ENCODE measurements at regions of chr21 and their contacts with region 1.

Region 1: GRCh38 chr21:36330904-36331303 is 10.9 kb downstream of the MORC3 start:
- DNase-seq: no peak
- ATAC-seq: peak; percentile 69 to 82 (median 78)
- H3K4me3 ChIP-seq: no peak overlapping the region
- H3K27ac ChIP-seq: peak overlapping the region; percentile 39
- H3K4me1 ChIP-seq: peaks cover 33% of the 10 kb centered on the region
- H3K27me3 ChIP-seq: no peaks in the 10 kb centered on the region
- CTCF ChIP-seq: peak; percentile 63

Region 2: GRCh38 chr21:36260030-36260787 is 70.7 kb before region 1 on chr21:
- intact Hi-C with region 1: loop called in 1 of 2 experiments (anchors 10 kb)
- DNase-seq: no peak
- ATAC-seq: peak in 3 of 4 donors; percentile 56 to 83 (median 59)
- H3K4me3 ChIP-seq: peak overlapping the region; percentile 68
- H3K27ac ChIP-seq: peak overlapping the region; percentile 56
- H3K4me1 ChIP-seq: no peaks in the 10 kb centered on the region
- H3K27me3 ChIP-seq: no peaks in the 10 kb centered on the region
- CTCF ChIP-seq: peak; percentile 66

Measured in psoas muscle (tissue), 8 donors.